ENCODE measurements at regions of chr14 and their contacts with region 1.

Region 1: GRCh38 chr14:70013269-70013873 is 134.2 kb downstream of the SMOC1 start:
- DNase-seq: peak; percentile 75
- H3K4me3 Mint-ChIP-seq: no peak overlapping the region
- H3K27ac Mint-ChIP-seq: peak overlapping the region; percentile 28
- H3K4me1 Mint-ChIP-seq: peaks cover 17% of the 10 kb centered on the region
- H3K27me3 Mint-ChIP-seq: no peaks in the 10 kb centered on the region
- CTCF ChIP-seq: peak; percentile 83

Region 2: DNA sequence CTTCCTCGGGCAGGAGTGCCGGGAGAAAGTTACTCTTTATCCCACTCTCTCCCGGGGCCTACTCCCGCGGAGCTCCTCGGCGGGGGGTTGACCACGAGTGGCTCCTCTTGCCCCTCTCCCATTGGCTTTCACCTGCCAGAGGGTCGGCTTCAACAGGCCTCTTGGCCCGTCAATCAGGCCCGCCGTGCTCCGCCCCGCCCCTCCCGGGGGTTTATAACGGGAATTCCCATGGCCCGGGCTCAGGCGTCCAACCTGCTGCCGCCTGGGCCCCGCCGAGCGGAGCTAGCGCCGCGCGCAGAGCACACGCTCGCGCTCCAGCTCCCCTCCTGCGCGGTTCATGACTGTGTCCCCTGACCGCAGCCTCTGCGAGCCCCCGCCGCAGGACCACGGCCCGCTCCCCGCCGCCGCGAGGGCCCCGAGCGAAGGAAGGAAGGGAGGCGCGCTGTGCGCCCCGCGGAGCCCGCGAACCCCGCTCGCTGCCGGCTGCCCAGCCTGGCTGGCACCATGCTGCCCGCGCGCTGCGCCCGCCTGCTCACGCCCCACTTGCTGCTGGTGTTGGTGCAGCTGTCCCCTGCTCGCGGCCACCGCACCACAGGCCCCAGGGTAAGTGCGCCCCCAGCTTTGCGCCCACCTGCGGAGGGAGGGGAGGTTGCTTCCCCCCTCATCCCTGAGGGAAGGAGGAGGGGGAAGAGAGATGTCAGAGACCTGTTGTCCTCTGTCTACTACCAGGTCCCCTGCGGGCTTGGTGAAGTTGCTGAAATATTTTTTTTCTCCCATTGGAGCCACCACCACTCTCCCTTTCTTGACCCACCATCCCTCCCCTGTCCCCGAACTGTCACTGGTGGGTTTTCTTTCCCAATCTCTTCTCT is 134.0 kb before region 1 on chr14 and contains the start of gene SMOC1:
- CTCF ChIA-PET with region 1: interaction called, 7 read pairs
- POLR2A ChIA-PET with region 1: interaction called, 4 read pairs
- intact Hi-C with region 1: loop called (anchors 1 kb)
- DNase-seq: peak; percentile 88
- H3K4me3 Mint-ChIP-seq: peak within 1 kb of the TSS; percentile 87
- H3K27ac Mint-ChIP-seq: peak within 1 kb of the TSS; percentile 61
- H3K4me1 Mint-ChIP-seq: peaks cover 40% of the 10 kb centered on the region
- H3K27me3 Mint-ChIP-seq: no peaks in the 10 kb centered on the region
- CTCF ChIP-seq: no peak
- total RNA-seq, gene SMOC1: 22.9 and 23.6 TPM in 2 replicates

Region 3: DNA sequence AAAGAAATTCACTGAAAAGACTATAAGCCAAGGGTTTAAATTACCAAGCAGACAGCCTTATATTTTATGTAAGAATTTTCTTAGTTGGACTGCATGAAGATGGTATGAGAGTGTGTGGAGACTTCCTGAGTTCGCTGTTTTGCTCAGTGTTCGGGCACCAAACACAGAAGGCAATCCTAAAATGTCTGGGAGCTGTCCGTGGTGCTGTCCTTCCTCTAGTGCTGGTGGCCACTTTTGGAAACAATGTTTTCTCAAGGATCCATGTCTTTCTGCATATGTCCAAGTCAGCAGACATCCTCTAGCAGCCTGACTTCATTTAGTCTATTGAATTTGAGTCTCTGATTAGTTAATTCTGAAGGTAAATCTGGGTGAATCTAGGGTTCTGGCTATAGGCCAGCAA is 39.6 kb after region 1 on chr14:
- CTCF ChIA-PET with region 1: no interaction called
- POLR2A ChIA-PET with region 1: no interaction called
- intact Hi-C with region 1: no loop called
- DNase-seq: peak; percentile 62
- H3K4me3 Mint-ChIP-seq: no peak overlapping the region
- H3K27ac Mint-ChIP-seq: no peak overlapping the region
- H3K4me1 Mint-ChIP-seq: no peaks in the 10 kb centered on the region
- H3K27me3 Mint-ChIP-seq: peaks cover 43% of the 10 kb centered on the region
- CTCF ChIP-seq: no peak